MCF 10A (cell line): ENCODE measurements at regions of chr7 and their contacts with region 1.

Region 1: DNA sequence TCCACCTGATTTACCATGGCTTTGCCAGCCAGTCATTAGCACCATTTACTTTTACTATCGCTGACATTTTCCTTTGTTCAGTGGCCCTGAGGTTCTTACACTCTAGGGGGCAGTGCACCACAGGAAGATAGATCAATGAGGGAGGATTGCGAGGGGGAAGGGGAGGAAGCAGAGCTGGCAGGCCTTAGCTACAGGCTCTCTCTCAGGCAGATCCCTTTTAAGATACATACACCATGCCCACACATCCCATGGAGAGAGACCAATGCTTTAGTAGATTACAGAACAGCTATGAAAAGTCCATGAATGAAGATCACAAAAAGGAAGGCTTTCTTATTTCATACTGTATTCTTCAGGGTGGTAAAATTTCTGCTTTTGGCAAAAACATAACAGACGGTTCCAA is 47.4 kb downstream of the DENND11 start:
- DNase-seq: peak; percentile 75
- H3K4me3 Mint-ChIP-seq: no peak overlapping the region
- H3K27ac Mint-ChIP-seq: no peak overlapping the region
- H3K4me1 Mint-ChIP-seq: peaks cover 5% of the 10 kb centered on the region
- H3K27me3 Mint-ChIP-seq: no peaks in the 10 kb centered on the region
- CTCF ChIP-seq: peak; percentile 47

Region 2: GRCh38 chr7:140661121-140661520 is 993.4 kb before region 1 on chr7:
- CTCF ChIA-PET with region 1: no interaction called
- POLR2A ChIA-PET with region 1: no interaction called
- intact Hi-C with region 1: loop called (anchors 5 kb)
- DNase-seq: no peak
- H3K4me3 Mint-ChIP-seq: no peak overlapping the region
- H3K27ac Mint-ChIP-seq: no peak overlapping the region
- H3K4me1 Mint-ChIP-seq: peaks cover 12% of the 10 kb centered on the region
- H3K27me3 Mint-ChIP-seq: no peaks in the 10 kb centered on the region
- CTCF ChIP-seq: no peak

Region 3: DNA sequence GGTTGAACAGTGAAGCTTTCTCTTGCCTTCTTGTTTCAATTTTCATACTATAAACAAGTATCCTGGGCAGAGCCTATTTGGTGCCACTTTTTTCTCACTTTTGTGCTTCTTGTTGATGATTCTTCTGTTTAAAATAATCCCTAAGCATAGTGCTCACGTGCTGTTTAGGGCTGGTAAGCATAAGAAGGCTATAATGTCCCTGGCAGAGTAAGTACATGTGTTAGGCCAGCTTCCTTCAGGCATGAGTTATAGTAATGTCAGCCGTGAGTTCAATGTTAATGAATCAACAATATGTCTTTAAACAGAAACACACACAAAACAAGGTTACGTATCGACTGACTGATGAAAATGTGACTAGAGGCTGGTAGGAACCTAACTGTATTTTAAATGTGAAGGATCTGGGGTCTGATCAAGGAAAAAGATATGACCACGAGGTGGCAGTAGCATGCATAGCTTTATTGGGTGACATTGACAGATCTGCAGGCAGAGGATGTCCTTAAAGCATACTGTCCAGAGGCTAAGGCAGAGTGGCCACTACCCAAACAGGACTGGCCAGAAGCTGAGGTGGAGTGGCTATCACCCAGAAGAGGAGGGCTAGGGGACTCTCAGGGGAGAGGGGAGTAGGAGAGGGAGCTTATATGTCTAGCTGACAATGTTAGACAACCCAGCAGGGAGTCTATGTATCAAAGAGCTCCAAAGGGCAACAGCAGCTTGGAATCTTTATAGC is 843.6 kb before region 1 on chr7:
- CTCF ChIA-PET with region 1: interaction called, 3 read pairs
- POLR2A ChIA-PET with region 1: interaction called, 4 read pairs
- intact Hi-C with region 1: loop called (anchors 2 kb)
- DNase-seq: peak; percentile 77
- H3K4me3 Mint-ChIP-seq: no peak overlapping the region
- H3K27ac Mint-ChIP-seq: no peak overlapping the region
- H3K4me1 Mint-ChIP-seq: peaks cover 6% of the 10 kb centered on the region
- H3K27me3 Mint-ChIP-seq: no peaks in the 10 kb centered on the region
- CTCF ChIP-seq: peak; percentile 79

Region 4: GRCh38 chr7:141071260-141071854 is 583.2 kb before region 1 on chr7:
- CTCF ChIA-PET with region 1: interaction called, 4 read pairs
- POLR2A ChIA-PET with region 1: no interaction called
- intact Hi-C with region 1: loop called (anchors 2 kb)
- DNase-seq: peak; percentile 31
- H3K4me3 Mint-ChIP-seq: peak overlapping the region; percentile 73
- H3K27ac Mint-ChIP-seq: no peak overlapping the region
- H3K4me1 Mint-ChIP-seq: no peaks in the 10 kb centered on the region
- H3K27me3 Mint-ChIP-seq: peaks cover 45% of the 10 kb centered on the region
- CTCF ChIP-seq: peak; percentile 22

Region 5: DNA sequence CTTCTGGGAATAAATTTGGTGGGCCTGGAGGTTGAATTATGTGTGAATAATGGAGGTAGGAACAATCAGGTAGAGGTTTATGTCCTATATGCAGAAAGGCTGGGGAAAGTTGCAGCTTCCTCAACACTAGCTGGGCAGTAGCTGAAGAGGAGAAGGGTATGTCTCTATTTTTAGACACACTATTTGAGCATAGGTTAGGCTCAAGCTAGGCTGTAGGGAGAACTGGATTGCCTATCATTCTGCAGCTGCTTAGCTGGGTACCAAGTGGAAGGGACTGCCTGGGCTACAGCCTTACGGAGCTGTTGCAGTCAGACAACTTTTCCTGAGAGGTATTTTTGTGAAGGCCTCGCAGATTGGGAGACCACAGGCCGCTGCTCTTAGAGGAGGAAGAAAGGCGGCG is 20.5 kb before region 1 on chr7:
- CTCF ChIA-PET with region 1: interaction called, 14 read pairs
- POLR2A ChIA-PET with region 1: no interaction called
- intact Hi-C with region 1: no loop called
- DNase-seq: no peak
- H3K4me3 Mint-ChIP-seq: no peak overlapping the region
- H3K27ac Mint-ChIP-seq: no peak overlapping the region
- H3K4me1 Mint-ChIP-seq: no peaks in the 10 kb centered on the region
- H3K27me3 Mint-ChIP-seq: no peaks in the 10 kb centered on the region
- CTCF ChIP-seq: no peak

Region 6: DNA sequence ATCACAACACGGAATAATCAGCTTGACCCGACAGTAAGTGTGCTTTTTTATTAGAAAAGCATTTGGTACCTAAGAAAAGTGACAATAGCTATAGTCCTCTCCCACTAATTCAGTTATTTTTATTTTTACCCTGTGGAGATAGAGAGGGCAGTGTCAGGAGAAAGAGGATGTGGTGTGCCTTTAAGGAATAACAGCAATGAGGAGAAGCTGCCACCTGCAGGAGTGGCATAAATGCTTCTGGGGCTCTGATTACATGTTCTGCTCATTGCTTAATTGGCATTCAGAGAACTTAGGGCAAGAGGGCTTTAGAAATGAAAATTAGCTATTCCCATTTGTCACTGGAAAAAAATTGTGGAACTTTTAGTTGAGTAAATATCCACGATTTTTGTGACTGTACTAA is 12.7 kb before region 1 on chr7:
- CTCF ChIA-PET with region 1: interaction called, 14 read pairs
- POLR2A ChIA-PET with region 1: interaction called, 4 read pairs
- intact Hi-C with region 1: no loop called
- DNase-seq: no peak
- H3K4me3 Mint-ChIP-seq: no peak overlapping the region
- H3K27ac Mint-ChIP-seq: no peak overlapping the region
- H3K4me1 Mint-ChIP-seq: no peaks in the 10 kb centered on the region
- H3K27me3 Mint-ChIP-seq: no peaks in the 10 kb centered on the region
- CTCF ChIP-seq: no peak

Region 7: GRCh38 chr7:141665208-141666035 is 10.9 kb after region 1 on chr7:
- CTCF ChIA-PET with region 1: interaction called, 29 read pairs
- POLR2A ChIA-PET with region 1: interaction called, 3 read pairs
- intact Hi-C with region 1: no loop called
- DNase-seq: no peak
- H3K4me3 Mint-ChIP-seq: no peak overlapping the region
- H3K27ac Mint-ChIP-seq: no peak overlapping the region
- H3K4me1 Mint-ChIP-seq: no peaks in the 10 kb centered on the region
- H3K27me3 Mint-ChIP-seq: no peaks in the 10 kb centered on the region
- CTCF ChIP-seq: no peak